Activated B cell treated with CpG ODN at 0.5 μM for 24 hours (primary cell): ENCODE measurements at regions of chr6 and their contacts with region 1.

Region 1: GRCh38 chr6:135909737-135910387 is 58.4 kb downstream of the PDE7B start:
- DNase-seq: no peak
- ATAC-seq: peak; percentile 86
- H3K4me3 Mint-ChIP-seq: no peak overlapping the region
- H3K27ac Mint-ChIP-seq: no peak overlapping the region
- H3K4me1 Mint-ChIP-seq: peaks cover 2% of the 10 kb centered on the region
- H3K27me3 Mint-ChIP-seq: no peaks in the 10 kb centered on the region
- CTCF ChIP-seq: no peak

Region 2: DNA sequence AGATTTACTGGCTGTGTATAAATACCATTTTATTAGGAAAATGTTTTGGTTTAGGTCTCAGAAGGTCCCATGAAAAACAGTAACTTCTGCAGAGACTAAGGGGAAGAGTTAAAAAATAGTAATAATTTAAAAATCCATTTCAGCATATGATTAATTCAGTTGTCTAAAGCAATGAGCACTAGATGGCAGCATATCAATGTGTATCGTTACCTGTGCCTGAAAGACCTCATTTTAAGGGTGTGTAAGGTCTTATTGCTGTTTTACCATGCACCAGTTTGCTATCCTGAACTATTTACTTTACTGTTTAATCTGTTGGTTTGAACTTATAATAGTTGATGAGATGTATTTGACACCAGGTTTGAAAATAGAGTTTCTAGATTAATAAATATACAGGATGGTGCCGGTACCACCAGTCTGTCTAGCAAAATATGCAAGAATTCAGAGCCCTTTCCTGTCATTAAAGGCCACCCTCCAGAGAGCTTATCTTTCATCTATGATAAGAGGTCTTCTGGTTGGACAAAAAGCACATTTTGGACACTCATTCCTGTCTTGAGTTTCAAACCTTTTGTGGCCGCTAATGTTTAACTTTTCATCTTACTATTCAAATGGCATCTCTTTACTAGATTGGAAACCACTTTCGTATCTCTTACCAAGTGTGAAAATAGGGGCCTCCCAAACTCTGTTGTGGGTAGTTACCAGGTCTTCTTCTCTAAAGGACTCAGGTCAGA is 403.4 kb before region 1 on chr6:
- CTCF ChIA-PET with region 1: interaction called, 16 read pairs
- POLR2A ChIA-PET with region 1: no interaction called
- intact Hi-C with region 1: loop called (anchors 1 kb)
- DNase-seq: no peak
- ATAC-seq: peak; percentile 62
- H3K4me3 Mint-ChIP-seq: no peak overlapping the region
- H3K27ac Mint-ChIP-seq: no peak overlapping the region
- H3K4me1 Mint-ChIP-seq: peaks cover 2% of the 10 kb centered on the region
- H3K27me3 Mint-ChIP-seq: no peaks in the 10 kb centered on the region
- CTCF ChIP-seq: peak; percentile 35

Region 3: DNA sequence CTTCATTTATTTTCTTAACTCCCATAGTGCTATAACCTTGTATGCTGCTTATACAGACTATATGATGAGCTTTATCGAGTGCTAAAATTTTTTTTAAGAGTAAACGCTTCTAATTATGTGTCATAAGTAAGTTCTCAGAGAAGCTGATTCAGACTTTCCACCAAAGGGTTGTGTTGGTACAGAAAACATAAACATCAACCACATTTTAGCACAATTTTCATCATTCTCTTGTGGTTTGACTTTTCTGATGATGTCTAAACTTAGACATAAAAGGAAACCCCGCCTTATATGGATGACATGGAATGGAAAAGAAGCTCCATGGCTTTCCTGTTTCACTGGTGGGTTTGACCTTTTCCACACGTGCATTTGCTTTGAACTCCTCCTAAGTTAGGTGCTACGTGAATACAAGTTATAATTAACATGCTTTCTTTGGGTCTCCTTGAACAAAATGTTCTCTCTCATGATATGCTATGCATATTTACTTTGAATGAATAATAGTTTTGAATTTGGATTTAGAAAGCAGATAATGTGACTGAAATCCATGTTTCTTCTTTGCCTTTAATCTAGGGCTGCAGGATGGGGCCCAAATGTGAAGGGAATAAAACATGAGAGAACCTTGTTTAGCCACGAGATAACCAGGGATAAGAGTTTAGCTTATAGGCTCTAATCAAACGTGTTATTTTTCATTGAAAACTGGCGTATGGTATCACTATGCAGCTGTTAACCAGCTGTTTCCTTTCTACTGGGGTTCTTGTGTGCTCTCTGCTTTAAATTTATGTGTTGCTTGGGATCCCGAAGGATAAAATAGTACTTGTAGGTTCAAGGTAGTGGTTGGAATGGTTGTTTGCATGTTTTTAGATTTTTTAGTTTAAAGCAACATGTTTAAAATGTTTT is 285.2 kb before region 1 on chr6:
- CTCF ChIA-PET with region 1: interaction called, 3 read pairs
- POLR2A ChIA-PET with region 1: no interaction called
- intact Hi-C with region 1: loop called (anchors 5 kb)
- DNase-seq: no peak
- ATAC-seq: no peak
- H3K4me3 Mint-ChIP-seq: no peak overlapping the region
- H3K27ac Mint-ChIP-seq: no peak overlapping the region
- H3K4me1 Mint-ChIP-seq: peaks cover 3% of the 10 kb centered on the region
- H3K27me3 Mint-ChIP-seq: peaks cover under 1% of the 10 kb centered on the region
- CTCF ChIP-seq: no peak

Region 4: GRCh38 chr6:135680964-135681913 is 228.6 kb before region 1 on chr6:
- CTCF ChIA-PET with region 1: interaction called, 45 read pairs
- POLR2A ChIA-PET with region 1: no interaction called
- intact Hi-C with region 1: loop called (anchors 1 kb)
- DNase-seq: no peak
- ATAC-seq: no peak
- H3K4me3 Mint-ChIP-seq: no peak overlapping the region
- H3K27ac Mint-ChIP-seq: no peak overlapping the region
- H3K4me1 Mint-ChIP-seq: no peaks in the 10 kb centered on the region
- H3K27me3 Mint-ChIP-seq: peaks cover 6% of the 10 kb centered on the region
- CTCF ChIP-seq: no peak

Region 5: GRCh38 chr6:135851442-135852271 is 58.2 kb before region 1 on chr6 and contains the start of gene PDE7B:
- CTCF ChIA-PET with region 1: interaction called, 5 read pairs
- POLR2A ChIA-PET with region 1: no interaction called
- intact Hi-C with region 1: loop called (anchors 2 kb)
- DNase-seq: peak; percentile 47
- ATAC-seq: peak; percentile 97
- H3K4me3 Mint-ChIP-seq: peak within 1 kb of the TSS; percentile 83
- H3K27ac Mint-ChIP-seq: peak within 1 kb of the TSS; percentile 82
- H3K4me1 Mint-ChIP-seq: peaks cover 58% of the 10 kb centered on the region
- H3K27me3 Mint-ChIP-seq: no peaks in the 10 kb centered on the region
- CTCF ChIP-seq: no peak
- total RNA-seq, gene PDE7B: 1.5 and 1.8 TPM in 2 replicates

Region 6: GRCh38 chr6:136163260-136163659 is 253.4 kb after region 1 on chr6:
- CTCF ChIA-PET with region 1: no interaction called
- POLR2A ChIA-PET with region 1: interaction called, 18 read pairs
- intact Hi-C with region 1: no loop called
- DNase-seq: no peak
- ATAC-seq: no peak
- H3K4me3 Mint-ChIP-seq: no peak overlapping the region
- H3K27ac Mint-ChIP-seq: no peak overlapping the region
- H3K4me1 Mint-ChIP-seq: no peaks in the 10 kb centered on the region
- H3K27me3 Mint-ChIP-seq: no peaks in the 10 kb centered on the region
- CTCF ChIP-seq: no peak

Region 7: DNA sequence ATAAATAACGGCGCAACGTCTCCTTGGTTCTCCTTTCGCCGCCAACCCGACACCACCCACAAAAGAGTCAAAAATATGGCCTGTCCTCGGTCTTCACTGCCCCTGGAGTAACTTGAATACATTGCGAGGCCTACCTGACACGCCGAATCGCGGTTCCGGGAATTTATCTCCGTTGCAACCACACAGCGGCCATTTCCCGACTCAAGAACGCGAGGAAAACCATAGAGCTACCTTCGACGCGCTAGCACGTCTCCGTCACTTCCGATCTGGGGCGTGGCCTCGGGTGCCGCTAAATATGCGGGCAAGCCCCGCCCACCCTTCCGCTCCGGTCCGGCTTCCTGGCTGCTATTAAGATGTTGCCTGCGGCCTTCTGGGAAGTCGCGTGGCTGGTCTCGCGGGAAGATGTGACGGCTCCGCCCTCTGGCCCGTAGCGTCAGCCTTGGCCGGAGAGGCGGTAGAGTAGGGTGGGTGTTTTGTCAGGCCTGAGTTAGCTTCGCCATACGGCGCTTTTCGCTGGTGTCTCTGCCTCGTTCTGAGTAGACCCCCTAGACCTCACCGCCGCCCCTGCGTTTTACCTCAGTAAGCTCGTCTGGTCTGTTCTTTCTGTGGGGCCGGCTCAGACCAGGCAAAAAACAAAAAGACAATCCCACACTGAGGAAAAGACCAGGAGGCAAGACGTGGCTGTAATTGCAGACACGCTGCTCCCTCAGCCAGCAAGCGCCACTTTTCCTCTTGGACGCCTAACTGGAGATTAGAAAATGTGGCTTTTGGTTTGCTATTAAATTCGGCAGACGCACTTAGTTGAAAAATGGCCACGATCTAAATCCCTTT is 379.9 kb after region 1 on chr6 and contains the start of gene BCLAF1:
- CTCF ChIA-PET with region 1: no interaction called
- POLR2A ChIA-PET with region 1: no interaction called
- intact Hi-C with region 1: no loop called
- DNase-seq: peak; percentile 98
- ATAC-seq: peak; percentile 80
- H3K4me3 Mint-ChIP-seq: peak within 1 kb of the TSS; percentile 100
- H3K27ac Mint-ChIP-seq: peak within 1 kb of the TSS; percentile 100
- H3K4me1 Mint-ChIP-seq: peaks cover 49% of the 10 kb centered on the region
- H3K27me3 Mint-ChIP-seq: no peaks in the 10 kb centered on the region
- CTCF ChIP-seq: no peak
- total RNA-seq, gene BCLAF1: 253 and 259 TPM in 2 replicates

Region 8: GRCh38 chr6:136317021-136317694 is 407.3 kb after region 1 on chr6:
- CTCF ChIA-PET with region 1: interaction called, 3 read pairs
- POLR2A ChIA-PET with region 1: no interaction called
- intact Hi-C with region 1: loop called (anchors 2 kb)
- DNase-seq: no peak
- ATAC-seq: peak; percentile 71
- H3K4me3 Mint-ChIP-seq: no peak overlapping the region
- H3K27ac Mint-ChIP-seq: no peak overlapping the region
- H3K4me1 Mint-ChIP-seq: no peaks in the 10 kb centered on the region
- H3K27me3 Mint-ChIP-seq: peaks cover 4% of the 10 kb centered on the region
- CTCF ChIP-seq: no peak